ENCODE measurements at regions of chr17 and their contacts with region 1.

Region 1: DNA sequence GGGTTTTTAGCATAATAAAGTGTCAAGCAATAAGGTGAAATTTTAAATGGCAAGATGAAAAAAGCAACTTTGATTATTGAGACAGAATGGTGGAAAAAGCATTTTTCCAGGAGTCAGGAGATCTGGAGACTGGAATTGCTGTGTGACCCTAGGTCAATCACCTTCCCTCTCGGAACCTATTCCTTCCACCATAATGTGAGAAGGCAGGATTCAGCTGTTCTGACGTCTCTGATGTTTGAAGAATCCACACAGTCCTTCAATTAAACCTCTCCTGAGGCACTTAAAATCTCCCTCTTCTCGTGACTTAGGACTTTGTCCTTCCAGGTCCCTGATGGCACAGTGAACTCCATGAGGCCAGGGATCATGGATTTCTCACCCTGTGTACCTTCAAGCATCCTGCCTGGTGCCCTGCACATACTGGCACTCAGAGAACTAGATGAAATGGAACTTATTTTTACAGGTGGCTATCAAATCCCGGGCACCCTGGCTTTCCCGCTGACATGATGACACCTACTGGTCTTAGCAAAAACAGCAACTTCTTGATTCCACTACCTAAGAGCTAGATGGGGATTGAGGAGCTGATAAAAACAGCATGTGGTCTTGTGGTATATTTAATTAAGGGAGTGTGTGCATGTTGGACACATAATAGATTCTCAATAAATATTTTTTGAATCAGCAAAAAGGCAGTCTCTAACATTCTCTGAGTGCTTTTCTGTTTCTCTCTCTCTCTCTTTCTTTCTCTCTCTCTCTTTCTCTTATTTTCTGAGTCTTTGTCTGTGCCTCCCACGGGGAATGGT is 2.3 kb upstream of the CCDC182 start:
- DNase-seq: peak; percentile 73
- ATAC-seq: peak; percentile 93
- H3K4me3 ChIP-seq: no peak overlapping the region
- H3K27ac ChIP-seq: no peak overlapping the region
- H3K4me1 ChIP-seq: no peaks in the 10 kb centered on the region
- H3K27me3 ChIP-seq: peaks cover 38% of the 10 kb centered on the region
- CTCF ChIP-seq: peak; percentile 91
- POLR2A ChIP-seq: no peak
- RAD21 ChIP-seq: peak; percentile 91

Region 2: DNA sequence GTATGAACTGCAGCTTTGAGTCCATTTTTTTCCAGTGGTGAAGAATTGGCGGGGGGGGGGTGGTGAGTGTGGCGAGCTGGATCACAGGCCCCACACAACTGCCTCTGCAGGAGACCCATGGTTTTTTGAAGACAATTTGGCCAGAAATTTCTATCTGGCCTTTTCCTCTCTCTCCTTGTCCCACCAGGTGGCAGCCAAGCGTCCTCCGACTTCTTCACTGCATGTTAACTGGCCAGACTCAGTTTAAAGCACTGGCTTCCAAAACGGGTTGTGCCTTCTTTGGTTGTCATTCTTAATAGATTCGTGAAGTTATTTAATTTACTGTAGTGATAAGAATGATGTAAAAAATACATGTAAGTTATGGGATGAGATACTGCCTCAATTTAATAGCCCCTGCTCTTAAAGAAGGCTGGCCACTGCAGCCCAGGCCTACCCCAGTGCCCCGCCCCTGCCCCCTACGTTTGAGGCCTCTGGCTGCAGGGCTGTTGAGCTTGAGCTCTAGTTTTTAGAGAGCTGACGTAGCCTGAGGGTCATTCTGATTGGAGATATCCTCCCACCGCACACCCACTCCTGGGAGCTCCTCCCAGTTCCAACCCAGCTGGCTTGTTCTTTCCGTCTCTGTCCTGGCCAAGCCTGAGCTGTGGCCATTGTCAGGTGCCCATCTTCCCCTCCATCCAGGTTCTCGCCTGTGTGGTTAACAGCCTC is 625.9 kb before region 1 on chr17:
- CTCF ChIA-PET with region 1: interaction called, 3 read pairs
- POLR2A ChIA-PET with region 1: no interaction called
- dilution Hi-C with region 1: no loop called
- in situ Hi-C with region 1: loop called (anchors 10 kb)
- intact Hi-C with region 1: no loop called
- DNase-seq: peak; percentile 36
- ATAC-seq: peak; percentile 90
- H3K4me3 ChIP-seq: no peak overlapping the region
- H3K27ac ChIP-seq: no peak overlapping the region
- H3K4me1 ChIP-seq: no peaks in the 10 kb centered on the region
- H3K27me3 ChIP-seq: no peaks in the 10 kb centered on the region
- CTCF ChIP-seq: peak; percentile 52
- POLR2A ChIP-seq: no peak
- RAD21 ChIP-seq: peak; percentile 36

Region 3: DNA sequence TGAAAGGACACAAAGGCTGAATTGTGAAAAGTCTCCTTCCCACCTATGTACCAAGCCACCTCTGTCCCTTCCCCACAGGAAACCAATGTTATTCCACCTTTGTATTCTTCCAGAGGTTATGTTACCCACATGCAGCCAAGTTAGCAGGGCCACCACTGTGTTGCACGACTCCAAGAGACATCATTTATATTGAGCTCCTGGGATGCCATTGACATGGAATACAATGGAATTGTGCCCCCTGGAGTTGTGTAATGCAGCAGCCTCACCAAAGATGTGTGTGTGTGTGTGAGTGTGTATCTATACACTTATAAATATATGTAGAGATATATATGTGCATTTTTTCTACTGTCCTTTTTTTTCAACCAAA is 512.7 kb before region 1 on chr17:
- CTCF ChIA-PET with region 1: no interaction called
- POLR2A ChIA-PET with region 1: no interaction called
- dilution Hi-C with region 1: no loop called
- in situ Hi-C with region 1: loop called (anchors 10 kb)
- intact Hi-C with region 1: no loop called
- DNase-seq: no peak
- ATAC-seq: no peak
- H3K4me3 ChIP-seq: no peak overlapping the region
- H3K27ac ChIP-seq: no peak overlapping the region
- H3K4me1 ChIP-seq: no peaks in the 10 kb centered on the region
- H3K27me3 ChIP-seq: peaks cover 16% of the 10 kb centered on the region
- CTCF ChIP-seq: no peak
- POLR2A ChIP-seq: no peak
- RAD21 ChIP-seq: no peak

Region 4: DNA sequence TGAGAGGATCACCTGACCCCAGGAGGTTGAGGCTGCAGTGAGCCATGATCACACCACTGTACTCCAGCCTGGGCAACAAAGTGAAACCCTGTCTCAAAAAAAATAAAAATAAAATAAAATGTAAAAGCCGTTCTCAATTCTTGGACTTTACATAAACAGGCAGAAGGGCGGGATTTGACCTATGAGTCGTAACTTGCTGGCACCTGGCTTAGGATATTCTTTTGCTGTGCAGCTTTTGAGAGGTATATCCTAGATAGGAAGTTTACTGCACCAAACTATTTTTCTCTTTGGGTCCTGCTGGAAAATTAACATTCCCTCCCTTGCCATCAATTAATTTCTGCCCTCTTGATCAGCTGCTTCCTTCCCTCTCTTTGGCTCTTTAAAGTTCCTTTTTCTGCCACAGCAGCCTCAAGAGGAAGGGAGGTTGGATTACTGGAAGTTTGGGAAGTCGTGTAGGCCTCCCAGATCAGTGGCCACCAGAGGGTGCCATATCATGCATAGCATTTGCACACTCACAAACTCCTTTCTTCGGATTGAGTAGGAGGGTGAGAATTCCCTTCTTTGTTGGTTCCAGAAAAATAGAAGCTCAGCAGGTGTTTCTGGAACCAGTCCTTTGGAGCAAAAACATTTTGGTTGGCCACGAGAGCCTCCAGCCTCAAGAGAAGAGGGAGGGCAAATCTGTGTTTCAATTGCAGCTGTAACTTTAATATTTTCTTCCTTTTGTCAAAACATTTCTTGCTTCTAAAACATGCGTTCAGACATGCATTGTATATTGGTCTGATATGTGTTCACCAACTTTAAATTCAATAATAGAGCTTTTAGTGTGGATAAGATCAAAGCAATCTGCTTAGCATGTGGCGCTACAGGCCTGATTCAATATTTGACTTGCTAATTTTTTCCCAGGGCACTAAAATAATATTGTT is 149.6 kb before region 1 on chr17:
- CTCF ChIA-PET with region 1: interaction called, 6 read pairs
- POLR2A ChIA-PET with region 1: no interaction called
- dilution Hi-C with region 1: no loop called
- in situ Hi-C with region 1: loop called (anchors 10 kb)
- intact Hi-C with region 1: loop called (anchors 1 kb)
- DNase-seq: peak; percentile 82
- ATAC-seq: peak; percentile 88
- H3K4me3 ChIP-seq: no peak overlapping the region
- H3K27ac ChIP-seq: no peak overlapping the region
- H3K4me1 ChIP-seq: peaks cover 4% of the 10 kb centered on the region
- H3K27me3 ChIP-seq: no peaks in the 10 kb centered on the region
- CTCF ChIP-seq: peak; percentile 85
- POLR2A ChIP-seq: no peak
- RAD21 ChIP-seq: peak; percentile 85